Naive thymus-derived CD4-positive, alpha-beta T cell (primary cell): ENCODE measurements at regions of chr20 and their contacts with region 1.

Region 1: DNA sequence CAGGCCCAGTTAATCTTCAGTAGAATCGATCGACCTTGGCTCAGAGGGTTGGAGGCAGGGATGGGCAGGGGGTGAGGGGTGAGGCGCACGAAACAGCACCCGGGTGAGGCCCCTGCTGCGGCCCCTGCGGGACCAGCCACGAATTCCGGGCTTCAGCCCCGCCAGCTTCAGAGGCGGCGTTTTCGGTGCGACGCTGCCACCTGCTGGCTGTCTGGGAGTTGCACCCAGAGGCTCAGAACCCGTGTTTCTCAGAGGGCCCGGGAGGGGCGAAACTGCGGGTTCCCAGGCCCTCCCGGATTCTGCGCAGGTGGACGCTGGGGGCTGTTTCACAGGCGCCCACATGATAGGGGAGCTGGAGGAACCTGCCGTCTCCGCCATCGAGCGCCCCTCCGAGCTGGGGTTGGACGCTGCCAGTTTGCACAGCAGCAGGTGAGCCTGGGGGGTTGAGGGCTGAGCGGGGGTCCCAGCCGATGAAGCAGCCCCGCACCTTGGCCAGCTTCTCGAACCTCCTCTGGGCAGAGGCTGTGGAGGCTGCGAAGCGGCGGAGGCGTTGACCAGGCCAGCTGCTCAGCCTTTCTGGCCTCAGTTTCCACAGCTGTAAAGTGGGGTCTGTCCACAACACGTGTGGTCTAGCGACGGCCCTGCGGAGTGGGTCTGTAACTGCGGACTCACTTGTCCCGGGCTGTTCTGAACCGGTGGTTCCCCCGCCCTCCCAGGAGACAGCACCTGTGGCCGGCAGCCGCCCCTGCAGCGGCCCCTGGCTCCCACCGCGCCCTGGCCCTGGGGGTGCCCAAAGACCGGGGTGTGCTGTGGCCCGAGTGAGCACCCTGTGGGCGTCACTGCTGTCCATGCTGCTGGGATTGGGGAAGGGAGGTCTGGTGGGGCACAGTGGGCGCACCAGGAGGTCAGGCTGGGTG is 2.5 kb upstream of the BHLHE23 start:
- DNase-seq: peak; percentile 65 to 91 (median 80)
- ATAC-seq: peak; percentile 82
- H3K4me3 ChIP-seq: peak overlapping the region; percentile 54
- H3K4me3 Mint-ChIP-seq: peak overlapping the region; percentile 59 to 98 (median 86)
- H3K27ac ChIP-seq: no peak overlapping the region
- H3K27ac Mint-ChIP-seq: peak overlapping the region in 4 of 9 donors; percentile 21 to 95 (median 79)
- H3K4me1 ChIP-seq: peaks cover 11 to 37% of the 10 kb centered on the region in 2 donors
- H3K4me1 Mint-ChIP-seq: peaks cover 4 to 33% (median 21%) of the 10 kb centered on the region in 7 donors
- H3K27me3 ChIP-seq: peaks cover 19% of the 10 kb centered on the region in 2 donors
- H3K27me3 Mint-ChIP-seq: peaks cover 19 to 78% (median 39%) of the 10 kb centered on the region in 5 donors

Region 2: DNA sequence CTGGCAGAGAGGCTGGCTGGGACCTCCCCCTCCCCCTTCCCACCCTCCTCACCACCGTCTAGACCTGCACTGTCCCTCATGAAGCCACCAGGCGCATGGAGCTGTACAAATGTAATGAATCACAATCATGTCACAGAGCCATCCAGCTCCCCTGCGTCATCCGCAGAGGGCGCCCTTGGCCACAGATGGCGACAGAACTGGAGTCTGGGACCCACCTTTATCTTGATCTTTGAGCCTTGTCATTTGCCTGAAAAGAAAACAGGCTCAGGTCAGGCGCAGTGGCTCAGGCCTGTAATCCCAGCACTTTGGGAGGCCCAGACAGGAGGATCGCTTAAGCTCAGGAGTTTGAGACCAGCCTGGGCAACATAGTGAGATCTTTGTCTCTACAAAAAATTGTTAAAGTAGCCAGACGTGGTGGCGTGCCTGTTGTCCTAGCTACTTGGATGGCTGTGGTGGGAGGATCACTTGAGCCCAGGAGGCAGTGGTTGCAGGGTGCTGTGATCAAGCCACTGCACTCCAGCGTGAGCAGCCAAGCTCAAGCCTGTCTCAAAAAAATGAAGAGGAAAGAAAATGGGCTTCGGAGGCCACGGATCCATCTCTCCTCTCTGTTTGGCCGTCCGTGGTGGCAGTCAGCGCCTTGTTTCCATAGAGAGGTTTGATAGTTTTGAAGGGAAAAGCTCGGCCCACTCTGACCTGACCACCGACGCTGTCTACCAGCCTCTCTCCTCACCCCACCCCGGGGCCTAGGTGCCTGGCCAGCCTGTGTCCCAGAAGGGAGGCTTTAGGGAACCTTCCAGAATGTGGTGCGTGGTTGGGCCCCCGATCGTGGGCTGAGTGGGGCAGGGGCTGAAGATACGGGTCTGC is 186.3 kb before region 1 on chr20:
- CTCF ChIA-PET with region 1: interaction called, 4 read pairs
- POLR2A ChIA-PET with region 1: no interaction called
- intact Hi-C with region 1: loop called in 1 of 2 experiments (anchors 5 kb)
- DNase-seq: no peak
- ATAC-seq: peak; percentile 49
- H3K4me3 ChIP-seq: no peak overlapping the region
- H3K4me3 Mint-ChIP-seq: peak overlapping the region in 3 of 10 donors; percentile 16 to 63 (median 41)
- H3K27ac ChIP-seq: no peak overlapping the region
- H3K27ac Mint-ChIP-seq: peak overlapping the region in 2 of 9 donors; percentile 13 to 22
- H3K4me1 ChIP-seq: peaks cover 3 to 8% of the 10 kb centered on the region in 2 donors
- H3K4me1 Mint-ChIP-seq: peaks cover 0 to 6% (median 2%) of the 10 kb centered on the region in 7 donors
- H3K27me3 ChIP-seq: peaks cover 0 to 8% of the 10 kb centered on the region in 2 donors
- H3K27me3 Mint-ChIP-seq: peaks cover 0 to 11% (median 4%) of the 10 kb centered on the region in 5 donors

Region 3: DNA sequence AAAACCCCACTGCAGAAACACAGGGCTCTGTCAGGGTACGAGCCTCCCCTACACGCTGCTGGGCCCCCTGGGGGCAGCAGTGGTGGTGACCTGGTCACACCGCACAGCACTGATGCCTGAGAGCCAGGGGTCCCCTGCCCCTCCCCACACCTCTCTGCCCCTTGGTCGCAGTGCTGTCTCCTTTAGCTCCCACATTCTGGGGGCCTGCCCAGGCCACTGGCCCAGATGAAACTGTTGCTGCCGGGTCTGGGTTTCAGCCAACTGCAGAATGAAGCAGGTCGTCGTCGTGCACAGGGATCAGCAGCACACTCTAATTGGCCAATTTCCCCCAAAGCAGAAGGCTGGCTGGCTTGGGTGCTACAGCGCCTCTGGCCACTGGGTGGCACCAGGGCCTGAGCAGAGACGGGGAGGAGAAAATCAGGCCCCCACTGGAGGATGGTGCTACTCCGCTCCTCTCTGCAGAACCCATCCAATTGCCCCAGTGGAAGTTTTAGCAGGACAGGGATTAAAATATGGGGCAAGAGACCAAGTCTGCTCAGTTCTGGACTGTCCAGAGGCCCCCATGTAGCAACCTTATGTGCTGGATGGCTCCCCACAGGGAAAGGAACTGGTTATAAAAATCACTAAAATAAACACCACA is 109.1 kb before region 1 on chr20:
- CTCF ChIA-PET with region 1: interaction called, 11 read pairs
- POLR2A ChIA-PET with region 1: interaction called, 3 read pairs
- intact Hi-C with region 1: loop called (anchors 1 kb)
- DNase-seq: peak; percentile 60 to 82 (median 78)
- ATAC-seq: peak; percentile 97
- H3K4me3 ChIP-seq: no peak overlapping the region
- H3K4me3 Mint-ChIP-seq: peak overlapping the region; percentile 54 to 81 (median 69)
- H3K27ac ChIP-seq: peak overlapping the region; percentile 60
- H3K27ac Mint-ChIP-seq: peak overlapping the region; percentile 75 to 95 (median 90)
- H3K4me1 ChIP-seq: peaks cover 13 to 22% of the 10 kb centered on the region in 2 donors
- H3K4me1 Mint-ChIP-seq: peaks cover 23 to 42% (median 34%) of the 10 kb centered on the region in 7 donors
- H3K27me3 ChIP-seq: no peaks in the 10 kb centered on the region
- H3K27me3 Mint-ChIP-seq: no peaks in the 10 kb centered on the region

Region 4: DNA sequence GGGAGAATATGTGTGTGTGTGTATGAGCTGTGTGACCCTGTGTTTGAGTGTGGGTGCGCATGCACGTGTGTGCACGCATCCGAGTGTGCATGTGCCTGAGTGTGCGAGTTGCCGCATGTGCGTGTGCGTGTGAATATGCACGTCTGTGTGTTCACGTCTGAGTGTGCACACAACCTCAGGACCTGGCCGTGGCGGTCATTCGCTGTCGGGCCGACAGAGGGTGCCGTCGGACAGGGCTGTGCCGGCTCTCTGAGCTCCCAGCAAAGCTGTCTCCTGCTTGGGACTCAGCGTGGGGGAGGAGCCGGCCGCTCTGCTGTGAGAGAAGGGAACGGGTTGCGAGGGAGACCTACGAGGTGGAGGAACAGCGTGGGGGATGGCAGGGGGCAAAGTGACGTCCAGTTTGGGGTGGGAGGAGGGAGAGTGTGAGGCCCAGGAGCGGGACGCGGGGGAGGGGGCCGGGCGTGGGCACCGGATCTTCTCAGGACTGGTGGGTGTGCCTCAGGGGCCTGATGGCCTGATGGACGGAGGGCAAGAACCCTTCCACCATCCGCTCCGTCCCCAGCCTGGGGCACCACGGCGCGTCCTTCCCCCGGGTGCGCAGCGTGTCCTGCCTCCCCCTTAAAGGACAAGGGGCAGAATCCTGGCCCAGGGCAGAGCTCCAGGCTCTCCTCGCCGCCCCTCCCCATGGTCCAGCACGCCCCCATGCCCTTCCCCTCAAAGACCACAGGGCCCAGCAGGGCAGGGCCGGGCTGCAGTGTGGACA is 36.9 kb before region 1 on chr20:
- CTCF ChIA-PET with region 1: interaction called, 15 read pairs
- POLR2A ChIA-PET with region 1: interaction called, 9 read pairs
- intact Hi-C with region 1: loop called (anchors 1 kb)
- DNase-seq: peak; percentile 70 to 86 (median 79)
- ATAC-seq: peak; percentile 97
- H3K4me3 ChIP-seq: peak overlapping the region; percentile 36
- H3K4me3 Mint-ChIP-seq: peak overlapping the region; percentile 36 to 85 (median 62)
- H3K27ac ChIP-seq: no peak overlapping the region
- H3K27ac Mint-ChIP-seq: peak overlapping the region in 4 of 9 donors; percentile 3 to 38 (median 17)
- H3K4me1 ChIP-seq: peaks cover 8 to 13% of the 10 kb centered on the region in 2 donors
- H3K4me1 Mint-ChIP-seq: peaks cover 13 to 22% (median 15%) of the 10 kb centered on the region in 7 donors
- H3K27me3 ChIP-seq: peaks cover 9 to 10% of the 10 kb centered on the region in 2 donors
- H3K27me3 Mint-ChIP-seq: peaks cover 27 to 49% (median 37%) of the 10 kb centered on the region in 5 donors

Region 5: DNA sequence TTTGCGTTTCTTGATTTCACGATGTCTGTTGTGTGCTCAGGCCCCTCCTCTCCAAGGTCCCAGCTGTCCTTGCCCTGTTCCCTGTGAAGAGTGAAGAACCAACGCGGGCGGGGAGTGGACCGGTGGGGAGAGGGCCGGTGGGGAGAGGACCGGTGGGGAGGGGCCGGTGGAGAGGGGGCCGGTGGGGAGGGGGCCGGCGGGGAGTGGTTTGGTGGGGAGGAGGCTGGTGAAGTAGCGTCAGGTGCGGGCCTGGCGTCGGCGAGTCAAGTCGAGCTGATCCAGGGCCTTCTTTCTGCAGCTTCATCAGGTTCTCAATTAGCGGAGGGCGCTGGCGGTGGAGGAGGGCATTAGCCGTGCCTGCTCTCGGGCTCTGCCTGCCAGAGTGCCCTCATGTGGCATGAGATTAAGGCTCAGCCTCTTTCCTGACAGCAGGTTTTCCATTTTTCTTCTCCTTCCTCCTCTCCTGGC is 18.7 kb after region 1 on chr20:
- CTCF ChIA-PET with region 1: interaction called, 3 read pairs
- POLR2A ChIA-PET with region 1: interaction called, 7 read pairs
- intact Hi-C with region 1: loop called in 1 of 2 experiments (anchors 1 kb)
- DNase-seq: peak in 2 of 9 donors; percentile 37 to 41
- ATAC-seq: no peak
- H3K4me3 ChIP-seq: no peak overlapping the region
- H3K4me3 Mint-ChIP-seq: peak overlapping the region in 7 of 10 donors; percentile 19 to 80 (median 54)
- H3K27ac ChIP-seq: no peak overlapping the region
- H3K27ac Mint-ChIP-seq: peak overlapping the region in 4 of 9 donors; percentile 59 to 69 (median 67)
- H3K4me1 ChIP-seq: peaks cover 0 to 3% of the 10 kb centered on the region in 2 donors
- H3K4me1 Mint-ChIP-seq: peaks cover 4 to 29% (median 6%) of the 10 kb centered on the region in 7 donors
- H3K27me3 ChIP-seq: peaks cover 0 to 3% of the 10 kb centered on the region in 2 donors
- H3K27me3 Mint-ChIP-seq: peaks cover 4 to 31% (median 6%) of the 10 kb centered on the region in 5 donors